ENCODE measurements at regions of chr18 and their contacts with region 1.

Region 1: DNA sequence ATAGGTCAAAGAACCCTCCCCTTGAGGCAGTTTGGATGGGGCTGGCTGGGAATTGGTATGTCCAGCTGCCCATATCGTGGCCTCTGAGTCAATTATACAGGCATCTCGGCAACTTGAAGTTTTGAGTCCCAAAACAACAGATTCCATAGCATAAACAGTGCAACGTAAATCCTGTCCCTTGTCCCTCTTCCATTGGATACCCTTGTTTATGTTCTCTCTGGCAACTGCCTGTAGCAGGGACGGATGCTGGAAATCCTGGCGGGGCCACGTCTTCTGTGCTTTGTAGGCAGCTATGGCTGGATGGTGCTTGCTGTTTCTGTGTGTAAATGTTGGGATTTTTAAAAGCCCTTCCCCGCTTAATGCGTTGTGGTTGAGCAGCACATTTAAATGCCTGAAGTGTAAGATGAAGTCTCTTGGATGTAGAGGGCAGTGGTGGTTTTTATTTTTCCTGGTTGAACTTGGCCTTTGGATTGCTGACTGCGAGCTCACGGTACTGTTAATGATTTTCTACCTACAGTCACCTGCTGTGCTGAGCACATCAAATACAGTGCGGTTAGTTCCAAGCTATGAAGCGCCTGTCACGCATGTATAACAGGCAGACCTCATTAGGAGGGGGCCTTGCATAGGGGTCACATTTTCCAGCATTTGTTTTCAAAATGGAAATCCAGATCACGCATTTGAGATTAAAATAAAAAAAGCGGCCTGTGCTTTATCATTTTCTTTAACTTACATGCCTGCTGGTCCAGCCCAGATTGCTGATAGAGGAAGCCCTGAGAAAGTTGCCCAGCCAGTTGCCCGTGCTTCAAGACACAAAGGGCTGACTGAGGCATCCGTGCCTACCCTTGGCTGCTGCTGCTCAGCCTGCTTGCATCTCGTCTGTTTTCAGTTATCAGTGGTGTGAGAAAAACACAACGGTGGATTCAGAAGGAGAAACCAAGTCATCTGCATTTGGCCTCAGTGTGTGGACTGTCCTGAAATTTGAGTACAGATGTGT is 84.7 kb downstream of the NEDD4L start:
- DNase-seq: no peak
- ATAC-seq: no peak
- H3K4me3 ChIP-seq: no peak overlapping the region
- H3K27ac ChIP-seq: no peak overlapping the region
- H3K4me1 ChIP-seq: no peaks in the 10 kb centered on the region
- H3K27me3 ChIP-seq: no peaks in the 10 kb centered on the region
- CTCF ChIP-seq: no peak

Region 2: DNA sequence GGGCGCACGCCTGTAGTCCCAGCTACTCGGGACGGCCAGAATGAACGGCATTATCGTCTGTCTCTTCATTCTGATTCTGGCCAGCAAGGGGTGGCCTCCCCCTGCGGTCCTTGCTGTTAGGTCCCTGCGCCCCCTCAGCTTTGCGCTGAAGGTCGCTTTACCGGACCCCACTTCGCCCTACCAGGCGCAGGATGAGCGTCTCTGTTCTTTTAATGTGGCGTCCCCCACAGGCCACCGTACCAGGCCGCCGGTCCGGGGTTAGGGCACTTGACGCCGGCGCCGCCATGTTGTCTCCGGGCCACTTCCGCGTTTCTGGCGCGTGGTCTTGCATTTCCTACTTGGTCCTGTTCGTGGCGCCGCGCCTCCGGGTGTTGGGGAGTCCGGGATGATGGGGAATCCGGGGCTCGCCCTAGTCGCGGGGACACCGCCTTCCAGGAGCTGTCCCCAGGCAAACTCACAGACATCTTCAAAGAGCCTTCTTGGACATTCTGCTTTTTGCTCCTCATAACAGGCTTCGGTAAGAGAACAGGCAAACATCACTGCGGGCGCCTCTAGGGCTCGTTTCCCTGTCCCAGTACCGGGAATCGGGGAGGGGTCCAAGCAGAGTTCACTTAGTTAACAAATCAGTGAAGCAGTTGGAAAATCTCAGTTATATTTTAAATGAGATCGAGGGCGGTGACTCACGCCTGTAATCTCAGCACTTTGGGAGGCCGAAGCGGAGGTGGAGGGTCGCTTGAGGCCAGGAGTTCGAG is 498.5 kb before region 1 on chr18:
- intact Hi-C with region 1: loop called in 1 of 2 experiments (anchors 5 kb)
- DNase-seq: peak; percentile 98 to 99
- ATAC-seq: peak; percentile 99 to 100 (median 100)
- H3K4me3 ChIP-seq: peak overlapping the region; percentile 77
- H3K27ac ChIP-seq: peak overlapping the region; percentile 78
- H3K4me1 ChIP-seq: peaks cover 7% of the 10 kb centered on the region
- H3K27me3 ChIP-seq: no peaks in the 10 kb centered on the region
- CTCF ChIP-seq: peak; percentile 75

Region 3: GRCh38 chr18:57881818-57882413 is 246.8 kb before region 1 on chr18:
- intact Hi-C with region 1: loop called (anchors 5 to 10 kb)
- DNase-seq: peak; percentile 52 to 59
- ATAC-seq: peak; percentile 73 to 84 (median 82)
- H3K4me3 ChIP-seq: no peak overlapping the region
- H3K27ac ChIP-seq: no peak overlapping the region
- H3K4me1 ChIP-seq: no peaks in the 10 kb centered on the region
- H3K27me3 ChIP-seq: no peaks in the 10 kb centered on the region
- CTCF ChIP-seq: peak; percentile 88

Region 4: GRCh38 chr18:58080451-58080850 is 48.2 kb before region 1 on chr18:
- intact Hi-C with region 1: no loop called
- DNase-seq: no peak
- ATAC-seq: no peak
- H3K4me3 ChIP-seq: no peak overlapping the region
- H3K27ac ChIP-seq: no peak overlapping the region
- H3K4me1 ChIP-seq: no peaks in the 10 kb centered on the region
- H3K27me3 ChIP-seq: no peaks in the 10 kb centered on the region
- CTCF ChIP-seq: no peak

Region 5: DNA sequence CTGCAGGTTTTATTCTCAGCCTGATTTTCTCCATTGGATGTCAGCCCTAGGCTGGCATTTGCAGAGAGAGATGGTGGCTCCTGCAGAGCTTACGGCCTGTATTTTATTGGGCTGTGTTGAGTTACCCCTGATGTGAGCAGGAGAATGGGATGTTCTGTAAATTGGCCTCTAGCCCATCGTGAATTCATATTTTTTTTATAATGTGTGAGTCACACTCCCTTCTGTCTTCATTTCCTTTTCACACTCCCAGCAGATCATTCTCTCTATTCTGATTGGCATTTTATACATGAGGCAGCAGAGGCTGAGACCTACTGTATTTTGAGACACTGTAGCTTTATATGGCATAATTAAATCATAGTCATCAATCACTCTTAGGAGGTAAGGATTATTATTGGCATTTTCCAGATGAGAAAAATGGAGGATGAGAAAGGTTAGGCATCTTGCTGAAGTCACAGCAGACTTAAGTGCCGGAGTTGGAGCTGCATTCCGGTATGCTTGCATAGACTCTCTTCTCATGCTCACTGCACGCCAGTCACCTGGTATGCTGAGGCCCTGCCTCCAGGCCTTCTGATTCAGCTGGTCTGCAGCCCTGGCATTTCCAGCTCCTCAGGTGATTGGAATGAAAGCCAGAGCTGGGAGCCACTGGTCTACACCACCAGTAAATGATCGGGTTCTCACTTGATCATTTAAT is 57.7 kb after region 1 on chr18:
- intact Hi-C with region 1: no loop called
- DNase-seq: no peak
- ATAC-seq: peak in 3 of 4 donors; percentile 57 to 66 (median 63)
- H3K4me3 ChIP-seq: no peak overlapping the region
- H3K27ac ChIP-seq: peak overlapping the region; percentile 46
- H3K4me1 ChIP-seq: peaks cover 20% of the 10 kb centered on the region
- H3K27me3 ChIP-seq: no peaks in the 10 kb centered on the region
- CTCF ChIP-seq: no peak

Region 6: DNA sequence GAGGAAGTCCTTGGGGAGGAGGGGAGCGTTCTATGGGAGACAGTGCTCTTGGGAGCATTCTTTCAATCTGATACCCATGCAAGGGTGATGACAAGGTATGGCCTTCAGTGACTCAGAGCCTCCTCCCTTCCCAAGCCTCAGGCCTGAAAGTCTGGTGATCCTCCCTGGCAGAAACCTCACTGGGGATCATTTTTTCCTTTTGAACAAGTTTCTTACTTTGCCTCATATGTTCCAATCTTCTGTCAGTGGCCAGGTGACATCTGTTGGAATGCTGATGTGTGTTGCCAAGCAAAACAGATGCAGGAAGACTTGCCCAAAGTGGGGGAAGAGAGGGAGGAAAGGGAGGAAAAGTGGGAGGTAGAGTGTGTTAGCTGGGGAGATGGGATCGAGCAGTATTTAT is 140.2 kb after region 1 on chr18:
- intact Hi-C with region 1: no loop called
- DNase-seq: no peak
- ATAC-seq: peak; percentile 81 to 88 (median 82)
- H3K4me3 ChIP-seq: no peak overlapping the region
- H3K27ac ChIP-seq: peak overlapping the region; percentile 32
- H3K4me1 ChIP-seq: peaks cover 50% of the 10 kb centered on the region
- H3K27me3 ChIP-seq: no peaks in the 10 kb centered on the region
- CTCF ChIP-seq: no peak

Region 7: DNA sequence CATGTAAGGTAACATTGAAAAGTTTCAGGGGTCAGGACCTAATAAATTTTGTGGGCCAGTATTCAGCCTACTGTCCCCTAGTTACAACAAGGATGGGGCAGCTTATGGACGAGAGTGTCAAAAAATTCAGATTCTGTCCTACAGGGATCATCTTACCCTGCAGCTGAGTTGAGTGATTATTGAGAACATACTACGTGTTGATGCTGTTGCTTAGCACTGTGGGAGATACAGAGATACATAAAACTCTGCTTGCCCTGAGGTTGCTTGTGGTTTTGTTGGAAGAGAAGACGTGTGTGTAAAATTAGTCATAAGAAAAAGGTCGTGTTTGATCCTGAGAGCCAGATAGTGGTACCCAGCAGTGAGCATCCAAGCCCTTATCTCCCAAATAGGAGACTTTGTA is 168.5 kb after region 1 on chr18:
- intact Hi-C with region 1: no loop called
- DNase-seq: no peak
- ATAC-seq: peak in 1 of 4 donors; percentile 25
- H3K4me3 ChIP-seq: no peak overlapping the region
- H3K27ac ChIP-seq: no peak overlapping the region
- H3K4me1 ChIP-seq: peaks cover 51% of the 10 kb centered on the region
- H3K27me3 ChIP-seq: no peaks in the 10 kb centered on the region
- CTCF ChIP-seq: no peak